Activated naive CD8-positive, alpha-beta T cell treated with anti-CD3 and anti-CD28 coated beads, Interleukin-2, amount 10 ng/mL, durations not matched to agents 7 days and 5 days (primary cell): ENCODE measurements at regions of chr20 and their contacts with region 1.

Region 1: DNA sequence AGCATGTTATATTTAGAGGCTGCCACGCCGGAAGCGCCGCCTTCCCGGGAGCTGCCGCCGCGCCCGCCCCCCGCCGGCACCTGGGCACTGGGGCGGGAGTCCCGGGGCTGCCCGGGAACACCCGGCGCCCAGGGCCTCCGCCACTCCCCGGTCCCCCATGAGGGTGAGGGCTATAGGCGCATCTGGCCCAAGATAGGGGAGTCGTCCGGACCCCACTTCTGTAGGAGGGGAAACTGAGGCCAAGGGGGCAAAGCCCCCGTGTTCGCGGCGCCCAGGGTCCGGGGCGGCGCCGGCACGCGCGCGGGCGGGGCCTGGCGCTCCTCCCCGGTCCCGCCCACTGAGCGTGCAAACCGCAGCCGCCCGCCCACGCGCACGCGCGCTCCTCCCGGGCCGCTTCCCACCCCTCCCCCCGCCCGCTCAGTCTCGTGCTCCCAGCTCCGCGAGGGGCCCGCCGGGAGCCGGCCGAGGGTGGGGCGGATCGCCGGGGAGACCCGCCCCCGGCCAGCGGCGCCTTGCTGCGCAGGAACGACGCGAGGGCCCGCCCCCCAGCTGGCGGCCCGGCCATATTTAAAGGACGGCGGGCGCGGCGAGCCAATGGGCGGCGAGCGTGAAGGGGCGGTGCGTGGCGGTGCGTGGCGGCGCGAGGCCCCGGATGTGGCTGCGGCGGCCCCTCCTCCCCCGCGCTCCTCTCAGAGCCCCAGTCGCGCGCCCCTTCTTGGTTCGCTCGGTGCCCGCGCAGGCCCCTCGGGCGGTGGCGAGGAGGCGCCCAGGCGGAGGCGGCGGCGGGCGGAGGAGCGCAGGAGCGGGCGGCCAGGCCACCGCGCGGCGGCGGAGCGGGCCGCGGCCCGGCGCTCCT is at the start of gene LSM14B:
- DNase-seq: peak; percentile 98
- ATAC-seq: peak; percentile 82
- H3K4me3 Mint-ChIP-seq: peak within 1 kb of the TSS; percentile 89
- H3K27ac Mint-ChIP-seq: peak within 1 kb of the TSS; percentile 93
- H3K4me1 Mint-ChIP-seq: peaks cover 35% of the 10 kb centered on the region
- H3K27me3 Mint-ChIP-seq: no peaks in the 10 kb centered on the region
- total RNA-seq, gene LSM14B: 45.1 to 45.5 TPM

Region 2: GRCh38 chr20:62104791-62105345 is 17.1 kb before region 1 on chr20:
- POLR2A ChIA-PET with region 1: no interaction called
- DNase-seq: no peak
- ATAC-seq: no peak
- H3K4me3 Mint-ChIP-seq: no peak overlapping the region
- H3K27ac Mint-ChIP-seq: no peak overlapping the region
- H3K4me1 Mint-ChIP-seq: no peaks in the 10 kb centered on the region
- H3K27me3 Mint-ChIP-seq: peaks cover 4% of the 10 kb centered on the region

Region 3: GRCh38 chr20:62143118-62143973 is 21.3 kb after region 1 on chr20 and contains the starts of genes PSMA7 and SS18L1:
- POLR2A ChIA-PET with region 1: interaction called, 24 read pairs
- DNase-seq: peak; percentile 93
- ATAC-seq: peak; percentile 85
- H3K4me3 Mint-ChIP-seq: peak within 1 kb of the TSS; percentile 92
- H3K27ac Mint-ChIP-seq: peak within 1 kb of the TSS; percentile 92
- H3K4me1 Mint-ChIP-seq: peaks cover 35% of the 10 kb centered on the region
- H3K27me3 Mint-ChIP-seq: no peaks in the 10 kb centered on the region
- total RNA-seq, gene PSMA7: 219 to 236 TPM
- total RNA-seq, gene SS18L1: 21.0 to 23.3 TPM